HCT116 (cell line): ENCODE measurements at regions of chr13 and their contacts with region 1.

Region 1: GRCh38 chr13:75422028-75422427 is 59.9 kb downstream of the TBC1D4 start:
- DNase-seq: no peak
- ATAC-seq: no peak
- H3K4me3 ChIP-seq: no peak overlapping the region
- H3K27ac ChIP-seq: no peak overlapping the region
- H3K4me1 ChIP-seq: peaks cover 4 to 8% of the 10 kb centered on the region in 2 experiments
- H3K27me3 ChIP-seq: no peaks in the 10 kb centered on the region
- CTCF ChIP-seq: no peak
- POLR2A ChIP-seq: no peak
- RAD21 ChIP-seq: no peak

Region 2: GRCh38 chr13:75445717-75446499 is 23.9 kb after region 1 on chr13:
- CTCF ChIA-PET with region 1: no interaction called
- POLR2A ChIA-PET with region 1: no interaction called
- RAD21 ChIA-PET with region 1: no interaction called
- intact Hi-C with region 1: loop called (anchors 2 kb)
- DNase-seq: no peak
- ATAC-seq: no peak
- H3K4me3 ChIP-seq: no peak overlapping the region
- H3K27ac ChIP-seq: no peak overlapping the region
- H3K4me1 ChIP-seq: no peaks in the 10 kb centered on the region
- H3K27me3 ChIP-seq: no peaks in the 10 kb centered on the region
- CTCF ChIP-seq: no peak
- POLR2A ChIP-seq: no peak
- RAD21 ChIP-seq: no peak